ENCODE measurements at regions of chr17 and their contacts with region 1.

Region 1: DNA sequence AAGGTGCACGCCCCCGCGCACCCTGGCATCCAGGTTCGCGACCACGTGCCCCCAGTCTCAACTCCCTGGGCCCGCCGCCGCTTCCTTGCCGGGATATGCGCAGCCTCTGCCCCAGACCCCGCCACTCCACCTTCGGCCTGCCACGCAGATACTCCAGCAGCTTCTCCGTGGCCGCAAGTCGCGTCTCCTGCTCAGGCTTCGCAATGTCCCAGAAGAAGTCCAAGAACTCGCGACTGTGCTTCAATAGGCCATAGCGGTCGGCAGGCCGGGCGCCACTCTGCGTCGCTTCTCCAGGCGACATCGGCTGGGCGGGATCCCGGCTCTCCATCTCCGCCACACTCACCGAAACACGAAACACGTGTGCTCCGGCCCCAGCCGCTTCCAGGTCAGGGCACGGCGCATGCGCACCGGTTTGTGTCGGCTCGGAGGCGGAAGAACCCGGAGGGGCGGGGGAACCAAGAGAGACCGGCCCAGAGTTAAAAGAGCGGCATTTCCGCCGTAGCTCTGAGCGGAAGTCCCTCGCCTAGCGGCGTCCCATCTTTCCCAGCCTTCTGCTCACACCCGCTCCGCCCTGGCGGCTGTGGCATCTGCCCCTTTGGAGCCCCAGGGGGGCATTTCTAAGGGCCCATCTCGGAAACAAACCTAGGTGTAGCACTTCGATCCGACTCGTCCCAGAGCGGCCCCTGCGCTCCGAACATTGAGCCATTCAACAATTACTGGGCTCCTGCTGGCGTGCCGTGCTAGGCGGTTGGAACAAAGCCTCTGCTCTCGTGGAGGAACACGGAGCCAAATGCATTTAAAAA is at the start of gene MYBBP1A:
- DNase-seq: peak; percentile 99
- H3K4me3 ChIP-seq: peak within 1 kb of the TSS; percentile 67 to 91 (median 78)
- H3K27ac ChIP-seq: peak within 1 kb of the TSS; percentile 74 to 87 (median 84)
- H3K4me1 ChIP-seq: peaks cover 20 to 24% (median 23%) of the 10 kb centered on the region in 4 donors
- H3K27me3 ChIP-seq: no peaks in the 10 kb centered on the region
- CTCF ChIP-seq: peak; percentile 20 to 49 (median 35)
- EP300 ChIP-seq: no peak
- POLR2A ChIP-seq: no peak
- total RNA-seq, gene MYBBP1A: 31.6 to 45.4 (median 36.1) TPM

Region 2: GRCh38 chr17:4366327-4367063 is 188.7 kb before region 1 on chr17 and contains the start of gene UBE2G1:
- intact Hi-C with region 1: no loop called
- DNase-seq: peak; percentile 99
- H3K4me3 ChIP-seq: peak within 1 kb of the TSS; percentile 85 to 100 (median 92)
- H3K27ac ChIP-seq: peak within 1 kb of the TSS; percentile 97 to 99 (median 98)
- H3K4me1 ChIP-seq: peaks cover 23 to 43% (median 41%) of the 10 kb centered on the region in 4 donors
- H3K27me3 ChIP-seq: peaks cover 0 to 4% (median 0%) of the 10 kb centered on the region in 4 donors
- CTCF ChIP-seq: peak; percentile 20 to 52 (median 33)
- EP300 ChIP-seq: no peak
- POLR2A ChIP-seq: peak; percentile 86
- total RNA-seq, gene UBE2G1: 53.7 to 84.3 (median 61.2) TPM

Region 3: DNA sequence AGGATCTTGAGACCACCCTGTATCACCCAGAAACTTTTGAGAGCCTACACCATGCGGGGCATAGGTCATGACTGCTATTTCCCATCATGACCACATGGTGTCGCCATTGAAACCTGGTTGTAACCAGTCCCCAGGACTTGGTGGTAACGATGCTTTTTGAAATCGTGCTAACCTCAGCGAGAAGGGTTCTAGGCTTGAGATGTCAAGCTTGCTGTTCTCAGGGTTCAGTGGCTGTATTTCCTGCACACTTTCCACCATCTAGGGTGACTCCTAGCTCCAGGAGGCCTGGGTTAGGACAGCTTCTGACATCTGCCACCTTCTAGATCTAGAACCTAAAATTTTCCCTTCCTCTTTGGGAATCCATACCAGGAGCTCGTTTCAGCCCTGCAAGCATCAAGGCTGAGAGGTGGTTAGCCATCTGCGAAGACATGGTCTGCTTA is 134.5 kb before region 1 on chr17:
- intact Hi-C with region 1: loop called (anchors 10 kb)
- DNase-seq: no peak
- H3K4me3 ChIP-seq: no peak overlapping the region
- H3K27ac ChIP-seq: no peak overlapping the region
- H3K4me1 ChIP-seq: peaks cover 0 to 6% (median 4%) of the 10 kb centered on the region in 4 donors
- H3K27me3 ChIP-seq: no peaks in the 10 kb centered on the region
- CTCF ChIP-seq: peak; percentile 71 to 83 (median 74)
- EP300 ChIP-seq: no peak
- POLR2A ChIP-seq: no peak